AG04450 (cell line): ENCODE measurements at regions of chr11 and their contacts with region 1.

Region 1: DNA sequence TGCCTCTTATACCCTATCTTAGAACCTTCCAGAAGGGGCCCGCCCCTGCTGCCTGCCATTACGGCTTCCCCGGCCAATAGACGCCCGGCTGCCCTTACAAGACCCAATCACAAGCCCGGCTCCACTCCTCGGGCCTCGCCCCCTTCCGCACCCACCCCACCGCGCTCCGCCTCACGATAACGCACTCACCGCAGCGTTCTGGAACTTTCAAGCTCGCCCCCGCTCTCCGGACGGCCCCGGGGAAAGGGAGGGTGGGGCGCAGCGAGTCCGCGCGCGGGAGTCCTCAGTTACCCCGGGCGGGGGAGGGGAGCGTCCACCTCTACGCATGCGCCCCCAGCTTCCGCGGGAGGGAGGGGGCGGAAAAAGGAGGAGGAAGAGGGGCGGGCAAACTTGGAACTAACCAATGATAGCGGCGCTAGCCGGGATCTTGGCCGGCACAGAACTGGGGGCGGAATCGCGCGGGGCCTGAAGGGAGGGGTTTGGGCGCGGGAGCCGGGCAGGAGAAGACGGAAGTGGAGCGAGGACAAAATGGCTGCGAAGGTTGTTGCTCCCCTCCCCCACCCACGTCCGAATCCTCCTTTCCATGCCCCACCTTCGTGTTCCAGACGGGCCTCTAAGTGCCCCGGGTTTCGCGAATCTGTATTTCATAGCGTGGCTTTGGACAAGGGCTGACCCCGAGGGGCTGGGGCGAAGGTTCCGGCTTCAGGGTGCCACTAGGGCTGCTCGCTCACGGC is 389 bp upstream of the HSPA8 start:
- DNase-seq: peak; percentile 100
- H3K4me3 ChIP-seq: peak overlapping the region; percentile 95
- H3K27ac ChIP-seq: peak overlapping the region; percentile 99
- H3K27me3 ChIP-seq: no peaks in the 10 kb centered on the region
- CTCF ChIP-seq: 0 out of 2 replicates have a peak, but pooled peaks have one; percentile 13

Region 2: DNA sequence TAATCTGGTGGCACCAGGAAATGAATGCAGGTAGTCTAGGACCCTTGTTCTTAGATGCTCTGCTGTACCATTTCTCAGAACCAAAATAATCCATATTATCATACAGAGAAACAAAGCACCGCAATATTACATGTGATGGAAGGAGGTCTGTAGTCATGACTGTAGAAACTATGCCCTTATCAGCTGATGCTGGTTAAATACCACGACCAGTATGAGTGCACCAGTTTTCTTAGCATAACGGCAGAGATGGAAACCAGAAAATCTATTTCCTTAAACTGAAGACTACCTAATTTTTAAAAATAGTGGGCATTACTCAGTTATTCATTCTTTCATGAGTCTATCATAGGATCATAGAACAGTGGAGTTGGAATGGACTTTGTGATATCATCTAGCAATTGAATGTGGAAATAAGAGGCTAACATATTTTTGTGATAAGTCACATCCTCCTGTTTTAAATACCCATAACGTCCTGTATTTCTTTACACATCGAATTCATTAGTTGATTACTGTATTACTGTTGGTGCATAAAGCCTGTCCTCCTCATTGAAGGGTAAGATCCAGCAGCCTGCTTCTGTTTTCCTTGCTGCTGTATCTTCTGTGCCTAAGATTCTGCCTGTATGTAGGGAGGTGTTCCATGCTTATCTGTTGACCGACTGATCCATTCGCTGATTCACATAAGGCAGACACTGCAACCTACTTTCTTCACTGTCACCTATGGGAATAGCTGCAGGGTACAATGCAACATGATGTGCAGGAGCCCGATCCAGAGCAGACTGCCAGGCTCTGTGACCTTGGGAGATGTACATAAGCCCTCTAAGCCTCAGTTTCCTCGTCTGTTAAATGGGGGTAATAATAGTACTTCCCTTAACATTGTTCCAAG is 164.5 kb before region 1 on chr11:
- CTCF ChIA-PET with region 1: no interaction called
- POLR2A ChIA-PET with region 1: no interaction called
- DNase-seq: no peak
- H3K4me3 ChIP-seq: no peak overlapping the region
- H3K27ac ChIP-seq: no peak overlapping the region
- H3K27me3 ChIP-seq: no peaks in the 10 kb centered on the region
- CTCF ChIP-seq: no peak

Region 3: DNA sequence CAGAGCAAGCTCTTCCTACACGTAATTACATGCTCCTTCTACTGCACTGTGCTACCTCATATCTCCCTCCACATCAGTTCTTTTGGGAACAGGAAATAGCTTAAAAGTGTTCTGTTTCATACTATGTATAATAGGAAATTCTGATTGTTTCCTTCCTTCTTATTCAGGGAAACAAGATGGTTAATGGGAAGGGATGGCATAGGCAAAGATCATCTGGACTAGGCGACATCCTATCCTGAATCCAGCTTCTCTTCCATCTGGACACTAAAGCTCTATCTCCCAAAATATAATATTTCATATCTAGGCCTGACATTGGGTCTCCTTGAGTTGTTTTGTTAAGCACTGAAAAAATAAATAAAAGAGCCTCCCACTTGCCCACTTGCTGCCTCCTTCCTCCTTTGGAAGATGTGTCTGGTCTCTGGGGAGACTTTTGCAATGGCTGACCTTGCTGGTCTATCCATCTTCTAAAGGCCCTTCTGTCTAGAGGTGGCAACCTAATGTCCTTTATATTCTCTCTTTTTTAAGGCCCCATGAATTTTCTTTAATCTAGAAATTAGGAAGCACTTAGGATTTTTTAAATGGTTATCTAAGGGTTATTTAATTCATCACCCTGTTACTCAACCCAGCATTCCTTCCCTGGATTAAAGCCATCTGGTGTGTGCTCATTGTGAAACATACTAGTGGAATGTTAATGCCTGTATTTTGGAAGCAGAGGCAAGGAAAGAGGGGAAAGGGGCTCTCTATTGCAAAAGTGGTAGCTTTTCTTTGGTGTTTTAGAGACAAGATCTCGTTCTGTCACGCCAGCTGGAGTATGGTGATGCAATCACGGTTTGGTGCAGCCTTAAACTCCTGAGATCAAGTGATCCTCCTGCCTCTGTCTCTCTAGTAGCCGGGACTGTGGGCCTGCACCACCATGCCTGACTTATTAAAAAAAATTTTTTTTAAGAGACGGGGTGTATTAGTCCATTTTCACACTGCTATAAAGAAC is 112.2 kb after region 1 on chr11:
- CTCF ChIA-PET with region 1: no interaction called
- POLR2A ChIA-PET with region 1: interaction called, 10 read pairs
- DNase-seq: peak; percentile 96
- H3K4me3 ChIP-seq: no peak overlapping the region
- H3K27ac ChIP-seq: peak overlapping the region; percentile 98
- H3K27me3 ChIP-seq: no peaks in the 10 kb centered on the region
- CTCF ChIP-seq: no peak

Region 4: GRCh38 chr11:123195188-123196059 is 133.1 kb after region 1 on chr11 and contains the start of gene CLMP:
- CTCF ChIA-PET with region 1: no interaction called
- POLR2A ChIA-PET with region 1: interaction called, 12 read pairs
- DNase-seq: no peak
- H3K4me3 ChIP-seq: peak within 1 kb of the TSS; percentile 94
- H3K27ac ChIP-seq: peak within 1 kb of the TSS; percentile 93
- H3K27me3 ChIP-seq: no peaks in the 10 kb centered on the region
- CTCF ChIP-seq: no peak
- polyA plus RNA-seq, gene CLMP: 251 and 288 TPM in 2 replicates

Region 5: DNA sequence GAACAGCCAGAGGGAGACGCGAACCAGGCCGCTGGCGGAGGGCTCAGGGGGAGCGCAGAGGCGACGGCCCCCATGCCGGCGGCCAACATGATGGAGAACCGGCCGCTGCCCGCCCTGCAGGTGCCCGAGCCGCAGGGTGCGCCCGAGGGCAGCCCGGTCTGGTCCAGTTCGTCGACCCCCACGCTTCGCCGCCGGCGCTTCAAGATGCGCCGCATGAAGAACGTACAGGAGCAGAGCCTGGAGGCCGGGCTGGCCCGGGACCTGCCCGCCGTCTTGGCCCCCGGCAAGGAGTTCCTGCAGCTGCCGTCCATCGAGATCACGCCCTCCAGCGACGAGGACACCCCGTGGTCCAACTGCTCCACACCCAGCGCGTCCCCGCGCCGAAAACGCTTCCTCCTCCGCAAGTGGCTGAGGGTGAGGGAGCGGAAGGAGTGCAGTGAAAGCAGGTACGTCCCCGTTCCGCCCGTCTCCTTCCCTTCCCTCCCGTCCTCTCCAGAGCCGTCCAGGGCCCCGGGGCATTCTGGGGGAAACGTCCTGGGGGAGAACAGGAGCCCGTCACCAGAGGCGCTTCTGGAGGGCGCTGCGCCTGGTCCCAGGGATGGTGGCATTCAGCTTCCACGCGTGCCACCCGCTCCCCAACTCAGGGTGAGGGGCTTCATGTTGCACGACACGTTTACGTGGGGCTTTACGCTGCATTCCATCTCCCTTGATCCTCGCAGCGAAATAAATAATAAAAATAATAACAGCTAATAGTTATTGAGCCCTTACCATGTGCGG is 368.6 kb after region 1 on chr11:
- CTCF ChIA-PET with region 1: no interaction called
- POLR2A ChIA-PET with region 1: interaction called, 15 read pairs
- DNase-seq: no peak
- H3K4me3 ChIP-seq: peak overlapping the region; percentile 78
- H3K27ac ChIP-seq: peak overlapping the region; percentile 52
- H3K27me3 ChIP-seq: no peaks in the 10 kb centered on the region
- CTCF ChIP-seq: no peak